Mucosa of descending colon (tissue), 3 donors: ENCODE measurements at regions of chr5 and their contacts with region 1.

Region 1: GRCh38 chr5:132866342-132867045 is at the starts of genes GDF9 and UQCRQ:
- DNase-seq: peak; percentile 96 to 97 (median 97)
- ATAC-seq: peak; percentile 98
- H3K4me3 ChIP-seq: peak within 1 kb of the TSS; percentile 79
- H3K4me1 ChIP-seq: peaks cover 14% of the 10 kb centered on the region
- CTCF ChIP-seq: no peak
- total RNA-seq, gene GDF9: 0.28 to 0.41 (median 0.36) TPM
- total RNA-seq, gene UQCRQ: 448 to 727 (median 690) TPM

Region 2: GRCh38 chr5:132787076-132787475 is 79.4 kb before region 1 on chr5:
- intact Hi-C with region 1: no loop called
- DNase-seq: no peak
- ATAC-seq: no peak
- H3K4me3 ChIP-seq: no peak overlapping the region
- H3K4me1 ChIP-seq: no peaks in the 10 kb centered on the region
- CTCF ChIP-seq: no peak

Region 3: DNA sequence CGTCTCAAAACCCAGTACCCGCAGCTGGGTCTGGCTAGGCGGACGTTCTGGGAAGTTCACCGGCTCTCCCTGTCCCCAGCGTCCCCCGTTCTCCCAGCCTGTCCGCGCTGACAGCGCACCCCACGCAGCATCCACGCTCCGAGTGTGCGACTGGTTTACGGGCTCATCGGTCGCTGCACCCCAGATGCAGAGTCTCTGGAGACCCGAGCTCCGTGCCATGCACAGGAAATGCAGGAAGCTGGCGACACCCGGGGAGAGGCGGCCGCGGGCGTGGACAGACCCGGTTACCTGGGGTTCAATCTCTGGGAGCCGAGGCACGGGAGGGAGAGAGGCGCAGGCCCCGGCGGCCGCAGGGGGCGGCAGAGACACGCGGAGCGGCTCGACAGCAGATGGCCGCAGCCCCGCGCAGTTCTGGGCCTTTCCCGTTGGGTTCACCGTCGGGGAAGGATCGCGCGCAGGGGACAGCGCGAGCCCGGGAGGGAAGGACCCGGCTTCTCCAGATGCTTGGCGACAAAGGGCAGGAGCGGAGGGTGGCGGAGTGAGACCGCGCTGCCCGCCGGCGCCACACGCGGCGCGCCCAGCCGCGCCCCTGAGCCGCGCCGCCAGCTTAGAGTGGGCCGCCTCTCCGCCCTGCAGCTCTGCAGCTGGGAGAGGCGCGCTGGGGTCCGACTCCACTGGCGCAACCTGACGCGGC is 36.6 kb before region 1 on chr5:
- intact Hi-C with region 1: loop called in 1 of 2 experiments (anchors 2 kb)
- DNase-seq: peak; percentile 87 to 92 (median 89)
- ATAC-seq: peak; percentile 87
- H3K4me3 ChIP-seq: peak overlapping the region; percentile 63
- H3K4me1 ChIP-seq: peaks cover 11% of the 10 kb centered on the region
- CTCF ChIP-seq: peak; percentile 89